H1 (cell line): ENCODE measurements at regions of chr6 and their contacts with region 1.

Region 1: DNA sequence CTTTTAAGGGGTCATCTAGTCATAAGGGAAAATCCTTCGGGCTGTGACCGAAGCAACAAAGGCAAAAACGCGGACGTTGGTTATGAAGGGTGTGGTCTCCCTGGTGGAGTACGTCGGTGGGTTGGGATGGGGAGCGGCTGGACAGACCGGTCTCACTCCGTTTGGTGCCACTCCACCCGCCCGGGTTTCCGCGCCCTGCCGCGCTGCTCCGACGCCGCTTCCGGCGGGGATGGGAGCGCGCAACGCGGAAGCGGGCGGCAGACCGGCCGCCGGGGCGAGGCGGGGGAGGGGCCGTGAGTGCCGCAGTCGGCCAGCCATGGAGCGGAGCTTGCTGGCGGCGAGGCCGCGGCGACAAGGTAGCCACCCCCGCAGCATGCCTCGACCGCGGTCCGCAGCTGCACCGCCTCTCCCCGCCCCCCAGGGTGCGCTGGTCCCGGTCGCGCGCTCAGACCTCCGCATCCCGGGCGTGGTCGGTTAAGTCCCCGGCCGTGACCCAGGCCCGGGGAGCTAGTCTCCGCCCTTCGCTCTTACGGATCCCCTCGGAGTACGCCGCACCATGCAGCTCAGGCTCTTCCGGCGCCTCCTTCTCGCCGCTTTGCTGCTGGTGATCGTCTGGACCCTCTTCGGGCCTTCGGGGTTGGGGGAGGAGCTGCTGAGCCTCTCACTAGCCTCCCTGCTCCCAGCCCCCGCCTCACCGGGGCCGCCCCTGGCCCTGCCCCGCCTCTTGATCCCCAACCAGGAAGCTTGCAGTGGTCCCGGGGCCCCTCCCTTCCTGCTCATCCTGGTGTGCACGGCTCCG is at the start of gene B3GALT4:
- DNase-seq: peak; percentile 86 to 89
- H3K4me3 ChIP-seq: peak within 1 kb of the TSS; percentile 52 to 81 (median 59)
- H3K27ac ChIP-seq: peak within 1 kb of the TSS; percentile 55; the same call in 1 of the 2 replicates
- H3K4me1 ChIP-seq: peaks cover 3 to 35% (median 12%) of the 10 kb centered on the region in 4 experiments
- H3K27me3 ChIP-seq: no peaks in the 10 kb centered on the region
- CTCF ChIP-seq: peak in 2 of 3 experiments; percentile 40 to 62; a peak in 2 of 4 replicates
- EP300 ChIP-seq: 0 out of 3 replicates have a peak, but pooled peaks of 1 of the 2 experiments have one; percentile 23
- POLR2A ChIP-seq: peak in 1 of 2 experiments; percentile 93; a peak in 2 of 3 replicates
- RAD21 ChIP-seq: 0 out of 4 replicates have a peak, but pooled peaks of 1 of the 2 experiments have one; percentile 19
- total RNA-seq, gene B3GALT4: 3.0 and 4.2 TPM in 2 replicates

Region 2: GRCh38 chr6:33264015-33264414 is 13.0 kb before region 1 on chr6:
- CTCF ChIA-PET with region 1: interaction called, 15 read pairs
- POLR2A ChIA-PET with region 1: interaction called, 44 read pairs
- DNase-seq: no peak
- H3K4me3 ChIP-seq: no peak overlapping the region
- H3K27ac ChIP-seq: no peak overlapping the region
- H3K4me1 ChIP-seq: no peaks in the 10 kb centered on the region
- H3K27me3 ChIP-seq: no peaks in the 10 kb centered on the region
- CTCF ChIP-seq: no peak
- EP300 ChIP-seq: no peak
- POLR2A ChIP-seq: no peak
- RAD21 ChIP-seq: no peak

Region 3: DNA sequence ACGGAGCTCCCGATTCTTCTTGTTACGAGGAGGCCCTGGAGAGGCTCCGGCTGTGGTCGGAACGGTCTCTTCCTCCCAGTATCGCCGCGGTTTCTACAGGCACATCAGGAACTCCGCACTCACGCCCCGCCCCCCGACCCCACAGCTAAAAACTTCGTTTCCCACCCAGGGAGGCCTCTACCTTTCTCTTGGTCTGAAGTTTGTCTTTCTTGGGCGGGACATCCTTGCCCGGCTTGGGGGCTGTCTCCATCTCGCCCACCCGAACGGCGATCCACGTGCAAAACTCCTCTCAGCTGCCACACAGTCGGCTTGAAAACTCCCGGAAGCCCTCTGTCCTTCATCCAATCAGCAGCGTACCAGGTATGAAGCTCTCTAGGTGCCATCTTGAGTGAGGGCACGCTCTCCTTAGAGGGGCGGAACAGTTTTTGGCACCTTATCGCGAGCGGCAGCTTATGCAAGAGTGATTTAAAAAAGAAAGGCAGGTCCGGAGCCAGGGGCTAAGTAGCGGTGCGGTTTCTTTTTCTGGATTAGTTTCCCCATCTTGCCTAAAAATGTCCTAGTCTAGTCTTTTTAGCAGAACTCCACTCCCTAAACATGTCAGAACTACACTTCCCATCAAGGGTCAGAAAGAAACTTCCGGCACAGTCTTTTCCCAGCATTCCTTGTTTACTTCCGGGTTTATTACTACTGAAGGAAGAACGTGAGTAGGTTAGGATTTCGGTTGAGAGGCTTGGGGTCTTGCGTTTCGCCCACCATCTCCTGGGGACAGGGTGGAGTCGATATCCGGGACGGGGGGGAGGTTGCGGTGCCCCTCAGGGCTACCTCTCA is 12.1 kb after region 1 on chr6 and contains the starts of genes PFDN6 and WDR46:
- CTCF ChIA-PET with region 1: interaction called, 81 read pairs
- POLR2A ChIA-PET with region 1: interaction called, 337 read pairs
- DNase-seq: peak in 1 of 2 experiments; percentile 84
- H3K4me3 ChIP-seq: peak within 1 kb of the TSS; percentile 74 to 97 (median 84)
- H3K27ac ChIP-seq: peak within 1 kb of the TSS; percentile 37; the same call in 1 of the 2 replicates
- H3K4me1 ChIP-seq: peaks cover 0 to 11% (median 5%) of the 10 kb centered on the region in 4 experiments; a peak in 5 of 7 replicates
- H3K27me3 ChIP-seq: no peaks in the 10 kb centered on the region
- CTCF ChIP-seq: no peak
- EP300 ChIP-seq: no peak
- POLR2A ChIP-seq: peak in 1 of 2 experiments; percentile 76; a peak in 2 of 3 replicates
- RAD21 ChIP-seq: no peak
- total RNA-seq, gene PFDN6: 93.3 and 95.7 TPM in 2 replicates
- total RNA-seq, gene WDR46: 91.0 and 99.4 TPM in 2 replicates

Region 4: DNA sequence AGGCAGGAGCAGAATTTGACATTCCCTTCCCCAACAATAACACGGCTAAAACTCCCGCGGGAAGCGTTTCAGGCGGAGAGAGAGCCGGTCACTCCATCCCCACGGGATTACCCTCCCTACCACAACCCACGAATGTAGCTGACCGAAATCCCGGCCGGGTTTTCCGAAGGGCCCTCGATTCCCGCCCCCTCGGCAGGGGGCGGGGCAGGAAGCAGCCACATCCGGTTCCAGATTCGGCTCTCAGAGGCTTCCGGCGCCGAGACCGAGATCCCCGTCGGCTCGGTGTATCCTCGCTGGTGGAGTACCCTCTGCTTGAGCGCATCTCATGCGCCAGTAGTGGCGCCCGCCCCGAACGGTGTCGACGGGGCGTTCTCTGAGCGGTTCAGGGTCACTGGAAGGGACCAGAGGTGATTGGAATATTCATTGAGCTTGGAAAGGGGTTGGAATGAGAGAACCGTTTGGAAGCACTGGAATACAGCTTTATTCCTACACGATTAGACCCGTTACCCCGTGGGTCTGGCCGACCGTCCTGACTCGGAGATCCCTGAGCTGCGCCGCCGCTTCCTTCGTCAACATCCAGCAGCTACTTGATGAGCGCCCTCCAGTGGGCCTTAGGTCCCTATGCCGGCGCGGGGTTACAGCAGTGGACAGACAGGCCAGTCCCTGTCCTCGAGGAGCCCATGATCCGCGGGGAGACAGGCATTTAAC is 22.3 kb after region 1 on chr6:
- CTCF ChIA-PET with region 1: interaction called, 77 read pairs
- POLR2A ChIA-PET with region 1: interaction called, 337 read pairs
- DNase-seq: peak in 1 of 2 experiments; percentile 90
- H3K4me3 ChIP-seq: peak overlapping the region; percentile 76 to 99 (median 94)
- H3K27ac ChIP-seq: peak overlapping the region; percentile 79
- H3K4me1 ChIP-seq: peaks cover 0 to 6% (median 4%) of the 10 kb centered on the region in 4 experiments; a peak in 6 of 7 replicates
- H3K27me3 ChIP-seq: no peaks in the 10 kb centered on the region
- CTCF ChIP-seq: peak; percentile 73 to 86 (median 78)
- EP300 ChIP-seq: no peak
- POLR2A ChIP-seq: 0 out of 3 replicates have a peak, but pooled peaks of 1 of the 2 experiments have one; percentile 19
- RAD21 ChIP-seq: peak; percentile 32 to 56

Region 5: GRCh38 chr6:33317669-33318425 is 40.8 kb after region 1 on chr6 and contains the start of gene ZBTB22:
- CTCF ChIA-PET with region 1: interaction called, 7 read pairs
- POLR2A ChIA-PET with region 1: interaction called, 25 read pairs
- DNase-seq: peak; percentile 95 to 96
- H3K4me3 ChIP-seq: peak within 1 kb of the TSS; percentile 67 to 89 (median 78)
- H3K27ac ChIP-seq: peak within 1 kb of the TSS; percentile 83
- H3K4me1 ChIP-seq: peaks cover 0 to 34% (median 22%) of the 10 kb centered on the region in 4 experiments; a peak in 6 of 7 replicates
- H3K27me3 ChIP-seq: no peaks in the 10 kb centered on the region
- CTCF ChIP-seq: no peak
- EP300 ChIP-seq: no peak
- POLR2A ChIP-seq: peak in 1 of 2 experiments; percentile 70; a peak in 2 of 3 replicates
- RAD21 ChIP-seq: no peak
- total RNA-seq, gene ZBTB22: 9.8 and 9.9 TPM in 2 replicates

Region 6: DNA sequence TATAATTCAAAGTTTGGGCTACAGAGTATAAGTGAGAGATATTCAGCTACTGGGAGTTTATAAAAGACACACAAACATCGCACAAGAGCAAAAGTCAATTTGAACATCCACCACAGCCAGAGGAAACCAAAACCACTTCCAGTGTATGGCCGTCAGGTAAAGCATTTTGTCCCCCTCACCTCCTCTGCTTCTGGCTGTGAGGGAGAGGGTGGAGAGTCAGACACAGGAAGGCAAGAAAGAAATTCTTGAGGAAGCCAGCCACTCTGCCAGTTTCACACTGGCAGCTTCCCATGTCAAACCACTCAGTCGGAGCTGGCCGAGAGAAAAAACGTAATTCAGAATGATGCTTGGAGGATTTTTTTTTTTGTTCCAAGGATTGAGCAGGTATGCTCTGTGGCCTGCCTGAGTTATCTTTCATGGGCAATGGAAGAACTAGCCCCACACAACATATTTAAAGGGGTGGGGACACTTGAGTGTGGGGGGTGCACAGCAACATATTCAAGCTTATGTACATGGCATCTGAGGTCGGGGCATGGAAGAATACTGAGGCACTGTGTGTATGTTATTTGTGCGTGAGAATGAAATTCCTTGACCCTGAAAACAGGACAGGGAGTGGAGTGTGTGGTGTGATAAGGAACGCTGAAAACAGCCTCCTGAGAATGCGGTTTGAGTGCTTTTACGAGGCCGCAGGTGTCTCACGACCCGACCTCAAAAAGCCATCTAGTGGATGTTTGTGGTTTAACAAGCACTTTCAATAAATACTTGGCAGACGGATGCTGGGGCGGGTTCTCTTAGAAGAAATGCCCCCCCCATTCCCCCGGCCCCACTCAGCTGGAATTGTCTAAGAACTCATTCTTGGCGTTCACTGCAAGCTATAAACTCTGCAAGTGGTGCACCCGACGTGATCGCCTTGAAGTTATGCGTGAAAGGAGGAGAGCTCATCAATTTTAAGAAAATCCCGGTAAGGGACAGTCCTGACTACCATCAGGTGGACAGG is 67.9 kb after region 1 on chr6:
- CTCF ChIA-PET with region 1: interaction called, 17 read pairs
- POLR2A ChIA-PET with region 1: interaction called, 3 read pairs
- DNase-seq: peak in 1 of 2 experiments; percentile 54
- H3K4me3 ChIP-seq: no peak overlapping the region
- H3K27ac ChIP-seq: no peak overlapping the region
- H3K4me1 ChIP-seq: peaks cover 0 to 5% (median 2%) of the 10 kb centered on the region in 4 experiments; a peak in 2 of 7 replicates
- H3K27me3 ChIP-seq: no peaks in the 10 kb centered on the region
- CTCF ChIP-seq: peak in 2 of 3 experiments; percentile 60 to 68; a peak in 3 of 4 replicates
- EP300 ChIP-seq: no peak
- POLR2A ChIP-seq: no peak
- RAD21 ChIP-seq: peak; percentile 44 to 60

Region 7: GRCh38 chr6:33430991-33431879 is 154.2 kb after region 1 on chr6:
- CTCF ChIA-PET with region 1: interaction called, 3 read pairs
- POLR2A ChIA-PET with region 1: interaction called, 11 read pairs
- DNase-seq: peak in 1 of 2 experiments; percentile 93
- H3K4me3 ChIP-seq: peak overlapping the region; percentile 31 to 61 (median 56)
- H3K27ac ChIP-seq: peak overlapping the region; percentile 98
- H3K4me1 ChIP-seq: peaks cover 15 to 43% (median 28%) of the 10 kb centered on the region in 4 experiments
- H3K27me3 ChIP-seq: no peaks in the 10 kb centered on the region
- CTCF ChIP-seq: no peak
- EP300 ChIP-seq: peak in 1 of 2 experiments; percentile 88; a peak in 2 of 3 replicates
- POLR2A ChIP-seq: peak in 1 of 2 experiments; percentile 54; a peak in 2 of 3 replicates
- RAD21 ChIP-seq: no peak